IMR-90 (cell line): ENCODE measurements at regions of chr5 and their contacts with region 1.

Region 1: GRCh38 chr5:148191010-148191409 is 11.8 kb upstream of the SPINK6 start:
- DNase-seq: no peak
- ATAC-seq: no peak
- H3K4me3 ChIP-seq: no peak overlapping the region
- H3K27ac ChIP-seq: no peak overlapping the region
- H3K4me1 ChIP-seq: no peaks in the 10 kb centered on the region
- H3K27me3 ChIP-seq: no peaks in the 10 kb centered on the region
- CTCF ChIP-seq: no peak
- POLR2A ChIP-seq: no peak
- RAD21 ChIP-seq: no peak

Region 2: GRCh38 chr5:148179234-148179824 is 11.7 kb before region 1 on chr5:
- CTCF ChIA-PET with region 1: interaction called, 11 read pairs
- POLR2A ChIA-PET with region 1: no interaction called
- dilution Hi-C with region 1: no loop called
- in situ Hi-C with region 1: no loop called
- intact Hi-C with region 1: no loop called
- DNase-seq: peak; percentile 63
- ATAC-seq: peak; percentile 72
- H3K4me3 ChIP-seq: no peak overlapping the region
- H3K27ac ChIP-seq: no peak overlapping the region
- H3K4me1 ChIP-seq: no peaks in the 10 kb centered on the region
- H3K27me3 ChIP-seq: no peaks in the 10 kb centered on the region
- CTCF ChIP-seq: peak; percentile 65
- POLR2A ChIP-seq: no peak
- RAD21 ChIP-seq: peak; percentile 78